ENCODE measurements at regions of chr16 and their contacts with region 1.

Region 1: GRCh38 chr16:21300309-21301167 is 22.4 kb upstream of the CRYM start:
- DNase-seq: peak; percentile 93
- ATAC-seq: peak; percentile 75
- H3K4me3 ChIP-seq: peak overlapping the region; percentile 90
- H3K27ac ChIP-seq: peak overlapping the region; percentile 54
- H3K4me1 ChIP-seq: no peaks in the 10 kb centered on the region
- H3K27me3 ChIP-seq: no peaks in the 10 kb centered on the region
- CTCF ChIP-seq: peak; percentile 71 to 97 (median 77)
- EP300 ChIP-seq: no peak
- POLR2A ChIP-seq: no peak
- RAD21 ChIP-seq: peak; percentile 86

Region 2: GRCh38 chr16:21184834-21185233 is 115.7 kb before region 1 on chr16:
- CTCF ChIA-PET with region 1: interaction called, 75 read pairs
- POLR2A ChIA-PET with region 1: interaction called, 3 read pairs
- RAD21 ChIA-PET with region 1: interaction called, 62 read pairs
- SMC1A ChIA-PET with region 1: interaction called, 57 read pairs
- in situ Hi-C with region 1: no loop called
- intact Hi-C with region 1: loop called (anchors 1 kb)
- DNase-seq: no peak
- ATAC-seq: no peak
- H3K4me3 ChIP-seq: no peak overlapping the region
- H3K27ac ChIP-seq: no peak overlapping the region
- H3K4me1 ChIP-seq: peaks cover 6% of the 10 kb centered on the region
- H3K27me3 ChIP-seq: no peaks in the 10 kb centered on the region
- CTCF ChIP-seq: no peak
- EP300 ChIP-seq: no peak
- POLR2A ChIP-seq: no peak
- RAD21 ChIP-seq: no peak

Region 3: GRCh38 chr16:21194771-21195301 is 105.7 kb before region 1 on chr16:
- CTCF ChIA-PET with region 1: interaction called, 75 read pairs
- POLR2A ChIA-PET with region 1: interaction called, 3 read pairs
- RAD21 ChIA-PET with region 1: interaction called, 62 read pairs
- SMC1A ChIA-PET with region 1: interaction called, 57 read pairs
- in situ Hi-C with region 1: no loop called
- intact Hi-C with region 1: no loop called
- DNase-seq: no peak
- ATAC-seq: no peak; the same call in 2 of the 3 replicates
- H3K4me3 ChIP-seq: no peak overlapping the region
- H3K27ac ChIP-seq: no peak overlapping the region
- H3K4me1 ChIP-seq: peaks cover 3% of the 10 kb centered on the region; the same call in 1 of the 2 replicates
- H3K27me3 ChIP-seq: no peaks in the 10 kb centered on the region
- CTCF ChIP-seq: no peak
- EP300 ChIP-seq: no peak
- POLR2A ChIP-seq: no peak
- RAD21 ChIP-seq: no peak

Measured in GM12878 (cell line).